ENCODE measurements at regions of chr19 and their contacts with region 1.

Region 1: GRCh38 chr19:10380313-10381102 is at the start of gene TYK2:
- DNase-seq: peak; percentile 99

Region 2: DNA sequence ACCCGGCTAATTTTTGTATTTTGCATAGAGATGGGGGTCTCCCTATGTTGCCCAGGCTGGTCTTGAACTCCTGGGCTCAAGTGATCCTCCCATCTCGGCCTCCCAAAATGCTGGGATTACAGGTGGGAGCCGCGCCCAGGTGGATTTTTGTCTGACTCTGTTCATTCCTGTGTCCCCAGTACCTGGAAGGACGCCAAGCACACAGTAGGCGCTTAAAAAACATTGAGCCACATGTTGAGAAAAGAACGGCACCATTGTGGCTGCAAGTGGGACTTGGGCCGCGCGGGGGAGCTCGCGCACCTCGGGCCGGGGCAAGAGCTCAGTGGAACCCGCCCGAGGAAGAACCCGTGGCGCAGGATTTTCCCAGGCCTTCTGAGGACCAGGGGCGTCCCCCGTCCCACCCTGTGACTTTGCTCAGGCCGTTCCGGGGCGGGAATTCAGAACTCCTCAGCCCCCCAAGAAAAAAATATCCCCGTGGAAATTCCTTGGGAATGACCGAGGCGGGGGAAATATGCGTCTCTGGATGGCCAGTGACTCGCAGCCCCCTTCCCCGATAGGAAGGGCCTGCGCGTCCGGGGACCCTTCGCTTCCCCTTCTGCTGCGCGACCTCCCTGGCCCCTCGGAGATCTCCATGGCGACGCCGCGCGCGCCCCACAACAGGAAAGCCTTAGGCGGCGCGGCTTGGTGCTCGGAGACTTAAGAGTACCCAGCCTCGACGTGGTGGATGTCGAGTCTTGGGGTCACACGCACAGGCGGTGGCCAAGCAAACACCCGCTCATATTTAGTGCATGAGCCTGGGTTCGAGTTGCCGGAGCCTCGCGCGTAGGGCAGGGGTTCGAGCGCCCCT is 111.0 kb before region 1 on chr19:
- CTCF ChIA-PET with region 1: interaction called, 3 read pairs
- POLR2A ChIA-PET with region 1: interaction called, 23 read pairs
- DNase-seq: peak; percentile 86

Region 3: DNA sequence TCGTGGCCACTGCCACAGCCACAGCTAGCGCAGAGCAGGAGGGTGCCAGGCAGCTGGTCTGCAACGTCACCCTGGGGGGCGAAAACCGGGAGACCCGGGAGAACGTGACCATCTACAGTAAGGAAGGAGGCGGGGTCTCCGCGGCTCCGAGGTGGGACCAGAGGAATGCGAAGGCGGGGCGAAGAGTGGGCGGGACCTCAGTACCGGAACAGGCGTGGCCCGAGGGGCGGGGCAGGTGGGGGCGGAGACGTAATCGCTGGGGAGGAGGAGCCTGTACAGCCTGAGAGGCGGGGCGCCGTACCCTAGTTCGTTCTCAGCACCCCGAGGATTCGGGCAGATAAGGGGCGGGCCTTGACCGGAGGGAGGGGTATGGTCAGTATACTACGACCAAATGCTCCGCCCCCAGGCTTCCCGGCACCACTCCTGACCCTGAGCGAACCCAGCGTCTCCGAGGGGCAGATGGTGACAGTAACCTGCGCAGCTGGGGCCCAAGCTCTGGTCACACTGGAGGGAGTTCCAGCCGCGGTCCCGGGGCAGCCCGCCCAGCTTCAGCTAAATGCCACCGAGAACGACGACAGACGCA is 88.2 kb before region 1 on chr19:
- CTCF ChIA-PET with region 1: no interaction called
- POLR2A ChIA-PET with region 1: interaction called, 22 read pairs
- DNase-seq: peak; percentile 92

Region 4: DNA sequence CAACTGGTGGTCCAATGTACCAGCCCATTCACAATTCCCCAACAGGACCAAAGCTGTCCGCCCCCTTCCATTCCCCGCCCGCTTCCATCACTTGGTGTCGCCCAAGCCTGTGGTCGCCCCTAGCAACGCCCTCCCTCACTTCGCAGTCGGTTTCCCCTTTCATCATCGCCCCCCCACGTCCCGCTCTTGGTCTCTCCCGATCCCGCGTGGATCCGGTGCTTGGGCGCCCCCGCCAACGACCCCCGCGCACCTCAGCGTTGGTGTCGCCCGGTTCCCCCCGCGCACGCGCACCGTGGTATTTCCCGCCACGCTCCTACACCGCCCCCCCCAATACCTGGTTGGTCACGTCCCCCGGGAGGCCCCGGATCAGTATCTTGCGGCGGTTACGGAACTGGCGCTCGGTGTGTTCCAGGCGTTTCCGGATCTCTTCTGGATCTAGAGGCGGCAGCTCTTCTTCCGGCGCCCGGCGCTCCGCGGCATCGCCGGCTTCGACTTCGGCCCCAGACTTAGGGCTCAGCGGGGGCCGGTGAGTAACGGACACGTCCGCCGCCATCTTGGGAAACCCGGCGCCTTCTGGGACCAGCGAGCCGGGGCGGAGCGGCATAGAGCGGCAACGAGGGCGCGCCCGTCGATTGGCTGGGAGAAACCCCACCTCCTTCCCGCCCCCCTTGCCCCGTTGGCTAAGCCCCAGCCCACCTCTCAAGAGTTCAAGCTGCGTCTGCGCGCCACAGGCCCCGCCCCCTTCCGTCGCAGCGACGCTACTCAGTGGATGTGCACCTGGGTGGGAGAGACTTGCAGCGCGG is 47.4 kb before region 1 on chr19 and contains the start of gene RAVER1:
- CTCF ChIA-PET with region 1: no interaction called
- POLR2A ChIA-PET with region 1: interaction called, 23 read pairs
- DNase-seq: peak; percentile 98

Region 5: DNA sequence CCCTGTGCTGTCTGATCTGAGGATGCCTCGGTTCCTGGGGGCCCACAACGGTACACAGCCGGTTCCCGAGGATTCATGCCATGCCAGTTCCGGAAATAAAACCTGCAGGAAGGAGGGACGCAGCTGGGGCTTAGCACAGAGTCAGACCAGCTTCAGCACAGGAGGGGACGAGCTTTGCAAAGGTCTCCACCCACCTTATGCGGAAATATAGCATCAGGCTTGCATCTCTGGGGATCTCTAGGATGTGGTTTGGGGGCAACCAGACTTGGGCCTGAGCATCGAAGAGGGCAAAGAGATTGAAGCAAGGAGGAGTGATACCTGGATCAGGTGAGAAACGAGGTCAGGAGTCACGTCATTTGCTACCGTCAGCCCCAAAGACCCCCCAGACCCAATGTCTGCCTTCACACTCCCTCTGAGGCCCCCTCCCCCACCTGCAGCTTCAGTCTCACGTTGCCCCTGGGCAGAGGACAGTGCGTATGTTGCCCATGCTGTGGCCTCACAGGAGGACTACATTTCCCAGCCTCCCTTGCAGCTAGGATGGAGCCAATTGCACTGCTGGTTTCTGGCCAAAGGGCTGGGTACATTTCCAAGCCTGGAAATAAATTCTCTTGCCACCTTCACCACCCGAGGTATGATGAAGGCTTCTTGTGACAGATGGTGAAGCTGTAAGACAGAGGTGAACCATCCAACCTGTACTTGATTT is 12.3 kb before region 1 on chr19:
- CTCF ChIA-PET with region 1: no interaction called
- POLR2A ChIA-PET with region 1: interaction called, 13 read pairs
- DNase-seq: no peak

Measured in HEK293T (cell line).